ENCODE measurements at regions of chr1 and their contacts with region 1.

Region 1: DNA sequence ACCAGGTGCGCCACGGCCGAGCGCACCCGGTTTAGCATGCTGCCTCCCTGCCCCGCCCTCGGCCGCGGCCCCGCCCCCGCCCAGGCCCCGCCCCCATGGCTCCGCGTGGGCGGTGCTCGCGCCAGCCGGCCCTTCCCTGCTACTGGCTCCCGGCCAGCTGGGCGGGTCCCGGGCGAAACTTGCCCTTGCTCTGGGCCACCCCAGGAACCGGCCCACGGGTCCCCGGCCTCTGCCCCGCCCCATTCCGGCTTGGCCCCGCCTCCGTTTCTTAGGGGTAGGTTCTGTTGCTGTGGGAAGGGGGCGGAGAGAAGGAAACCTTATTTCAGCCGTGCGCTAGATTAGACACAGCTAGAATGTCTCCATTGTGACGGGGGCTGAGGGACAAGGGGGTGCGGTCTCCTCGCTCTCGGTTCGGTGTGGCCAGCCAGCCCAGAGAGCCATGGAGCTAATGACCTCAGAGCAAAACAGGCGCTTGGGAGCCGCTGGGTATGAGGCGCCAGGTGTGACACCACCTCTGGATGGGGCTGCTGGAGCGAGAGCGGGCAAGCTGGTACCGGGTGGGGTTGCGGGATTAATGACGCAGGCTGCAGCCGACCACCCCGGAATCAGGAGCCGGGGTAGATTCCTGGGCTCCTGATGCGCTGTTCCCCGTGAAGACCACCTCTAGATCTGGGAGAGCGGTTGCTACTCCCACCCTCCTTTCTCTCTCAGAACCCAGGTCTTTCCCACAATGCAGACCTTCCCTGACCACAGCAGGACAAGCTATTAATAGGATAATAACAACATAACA is at the start of gene PPM1J:
- DNase-seq: peak; percentile 97
- CTCF ChIP-seq: no peak

Region 2: DNA sequence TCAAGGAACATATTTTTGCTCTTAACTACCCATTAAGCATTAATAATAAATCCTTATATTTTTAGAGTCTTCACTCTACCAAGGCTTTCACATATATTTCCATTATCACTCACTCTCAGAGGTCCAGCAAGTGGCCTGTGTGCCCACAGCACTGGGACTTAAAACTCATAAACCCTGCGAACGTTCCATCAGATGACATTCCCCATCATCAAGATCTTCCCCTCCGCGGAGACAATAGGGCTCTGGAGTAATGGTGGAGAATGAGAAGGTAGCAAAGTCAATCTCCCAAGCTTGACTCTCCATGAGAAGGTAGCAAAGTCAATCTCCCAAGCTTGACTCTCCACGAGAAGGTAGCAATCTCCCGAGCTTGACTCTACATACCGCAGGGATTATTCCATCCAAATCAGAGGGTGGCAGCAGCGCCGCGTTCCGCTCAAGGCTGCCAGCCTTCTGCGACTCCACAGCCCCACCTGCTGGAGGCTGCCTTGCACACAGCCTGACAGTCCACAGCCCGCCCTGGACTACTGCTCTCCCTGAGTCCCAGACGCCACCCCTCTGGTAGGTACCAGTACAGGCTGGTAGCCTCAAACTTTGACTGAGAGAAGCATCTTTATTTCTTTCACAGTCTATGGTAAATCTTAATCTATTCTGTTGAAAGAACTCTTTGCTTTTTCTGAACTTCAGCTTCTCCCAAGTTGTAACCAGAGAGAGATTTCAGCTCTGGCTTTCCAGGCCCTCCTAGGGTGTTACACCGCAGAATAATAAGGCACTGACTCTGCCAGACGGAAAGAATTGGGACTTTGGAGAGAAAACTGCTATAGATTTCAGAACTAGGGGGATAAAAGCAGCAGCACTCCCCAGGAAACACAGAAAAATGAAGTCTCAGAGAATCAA is 345.8 kb before region 1 on chr1:
- CTCF ChIA-PET with region 1: interaction called, 14 read pairs
- POLR2A ChIA-PET with region 1: no interaction called
- DNase-seq: peak; percentile 81
- CTCF ChIP-seq: peak; percentile 99

Region 3: DNA sequence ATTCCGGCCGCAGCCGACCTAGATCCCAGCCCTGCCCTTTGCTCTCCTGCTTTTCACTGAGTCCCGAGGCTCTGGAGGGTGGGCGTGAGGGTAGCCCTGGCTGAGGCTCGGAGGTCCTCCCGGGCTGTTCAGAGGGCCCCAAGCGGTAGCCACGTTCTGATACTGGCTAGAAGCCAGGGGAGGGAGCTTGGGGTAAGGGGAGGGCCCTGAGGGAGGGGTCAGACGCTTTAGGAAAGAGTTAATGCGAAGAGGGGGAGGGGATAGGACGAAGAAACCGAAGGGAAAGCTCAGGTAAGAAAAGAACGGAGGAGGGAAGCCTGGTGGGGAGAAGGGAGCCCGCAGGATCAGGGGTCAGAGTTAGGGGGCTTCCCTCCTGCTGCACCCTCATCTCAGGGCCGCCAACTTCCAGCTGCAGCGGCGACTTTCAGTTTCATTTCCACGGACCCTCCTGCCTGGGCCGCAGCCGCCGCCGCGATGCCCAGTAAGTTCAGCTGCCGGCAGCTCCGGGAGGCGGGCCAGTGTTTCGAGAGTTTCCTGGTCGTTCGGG is 40.9 kb before region 1 on chr1 and contains the start of gene MOV10:
- CTCF ChIA-PET with region 1: interaction called, 24 read pairs
- POLR2A ChIA-PET with region 1: no interaction called
- DNase-seq: peak; percentile 74
- CTCF ChIP-seq: no peak

Region 4: GRCh38 chr1:112727716-112728115 is 12.3 kb after region 1 on chr1:
- CTCF ChIA-PET with region 1: interaction called, 62 read pairs
- POLR2A ChIA-PET with region 1: no interaction called
- DNase-seq: no peak
- CTCF ChIP-seq: no peak

Region 5: DNA sequence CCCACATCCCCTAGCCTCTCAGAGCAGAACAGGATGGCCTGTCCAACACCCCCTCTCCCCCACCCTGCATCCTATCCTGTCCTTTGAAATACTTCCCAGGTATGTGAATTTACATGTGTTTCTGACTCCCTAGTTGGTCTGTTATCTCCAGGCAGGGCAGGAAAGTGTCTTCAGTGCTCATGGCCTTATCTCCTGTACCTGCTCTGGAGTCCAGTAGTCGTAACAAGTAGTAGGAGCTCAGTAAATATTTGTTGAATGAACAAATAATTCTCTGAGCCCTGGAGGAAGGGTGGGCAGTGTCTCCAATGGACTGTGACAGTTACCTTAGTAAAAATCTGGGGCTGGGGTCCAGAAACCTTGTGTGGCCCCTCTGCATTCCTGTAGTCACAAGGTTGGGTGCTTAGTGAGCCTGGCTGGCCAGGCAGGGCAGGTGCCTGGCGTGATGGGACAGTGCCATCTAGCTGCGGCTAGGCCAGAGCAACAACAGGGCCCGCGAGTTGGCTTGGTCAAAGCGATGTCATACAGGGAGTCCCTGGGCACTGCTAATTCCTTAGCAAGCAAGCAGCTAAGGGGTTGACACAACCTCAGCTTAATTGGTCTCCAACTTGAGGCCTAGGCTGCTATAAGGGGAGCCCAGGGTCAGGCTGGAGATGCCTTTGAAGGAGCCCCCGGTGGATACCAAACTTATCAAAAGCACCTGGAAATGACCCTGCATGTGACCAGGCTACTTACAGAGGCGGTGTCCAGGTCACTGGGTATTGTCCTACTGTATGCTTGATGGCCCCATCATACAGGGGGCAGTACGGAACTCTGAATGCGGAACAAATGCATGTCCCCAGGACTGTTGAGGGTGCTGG is 88.7 kb after region 1 on chr1:
- CTCF ChIA-PET with region 1: interaction called, 410 read pairs
- POLR2A ChIA-PET with region 1: no interaction called
- DNase-seq: peak; percentile 83
- CTCF ChIP-seq: peak; percentile 97

Region 6: DNA sequence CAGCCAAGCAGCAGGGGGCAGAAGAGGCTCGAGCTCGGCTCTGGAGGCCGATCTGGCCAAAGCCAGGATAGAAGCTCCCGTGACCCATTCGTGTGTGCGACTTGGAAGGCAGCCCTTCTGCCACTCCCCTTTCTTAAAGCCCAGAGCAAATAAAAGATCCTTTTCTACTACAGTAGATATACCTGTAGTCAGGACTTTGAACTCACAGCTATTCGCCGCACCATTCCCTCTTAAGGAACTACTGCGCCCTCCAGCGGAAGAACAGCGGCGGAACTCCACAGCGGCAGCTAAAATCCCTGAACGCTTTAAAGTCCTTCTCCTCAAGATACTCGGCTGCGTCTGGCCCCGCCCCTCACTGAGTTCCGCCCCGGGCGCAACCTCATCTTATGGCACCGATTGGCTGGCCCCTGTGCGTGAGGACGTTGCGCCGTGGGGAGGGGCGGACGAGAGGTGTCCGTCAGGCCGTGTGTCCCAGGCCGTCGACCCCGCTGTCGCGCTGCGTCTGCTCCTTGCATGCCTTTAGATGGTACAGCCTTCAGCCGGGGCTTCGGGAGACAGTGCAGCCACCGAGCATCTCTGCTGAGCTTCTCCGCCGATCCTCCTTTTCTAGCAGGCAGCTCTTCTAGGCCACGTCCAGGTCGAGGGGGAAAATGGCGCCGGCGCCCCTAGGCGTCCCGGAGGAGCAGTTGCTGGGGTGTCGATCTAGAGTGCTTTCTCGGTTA is 357.5 kb after region 1 on chr1 and contains the start of gene LRIG2:
- CTCF ChIA-PET with region 1: interaction called, 28 read pairs
- POLR2A ChIA-PET with region 1: no interaction called
- DNase-seq: peak; percentile 95
- CTCF ChIP-seq: peak; percentile 94